ENCODE measurements at regions of chr10 and their contacts with region 1.

Region 1: GRCh38 chr10:25080880-25081581 is 64.6 kb downstream of the THNSL1 start:
- DNase-seq: peak; percentile 77 to 90 (median 80)
- ATAC-seq: peak; percentile 96
- H3K4me3 ChIP-seq: no peak overlapping the region
- H3K27ac ChIP-seq: no peak overlapping the region
- H3K4me1 ChIP-seq: peaks cover 0 to 14% of the 10 kb centered on the region in 2 experiments; a peak in 2 of 5 replicates
- H3K27me3 ChIP-seq: no peaks in the 10 kb centered on the region
- CTCF ChIP-seq: peak; percentile 90 to 95 (median 93)
- EP300 ChIP-seq: no peak
- POLR2A ChIP-seq: no peak
- RAD21 ChIP-seq: peak; percentile 94 to 97

Region 2: GRCh38 chr10:24617771-24618391 is 463.1 kb before region 1 on chr10:
- CTCF ChIA-PET with region 1: interaction called, 3 read pairs
- POLR2A ChIA-PET with region 1: no interaction called
- in situ Hi-C with region 1: no loop called
- intact Hi-C with region 1: loop called (anchors 5 kb)
- DNase-seq: peak; percentile 55 to 80 (median 66)
- ATAC-seq: peak; percentile 98
- H3K4me3 ChIP-seq: no peak overlapping the region
- H3K27ac ChIP-seq: no peak overlapping the region
- H3K4me1 ChIP-seq: no peaks in the 10 kb centered on the region; a peak in 2 of 5 replicates
- H3K27me3 ChIP-seq: no peaks in the 10 kb centered on the region
- CTCF ChIP-seq: peak; percentile 94 to 96 (median 94)
- EP300 ChIP-seq: no peak
- POLR2A ChIP-seq: no peak
- RAD21 ChIP-seq: peak; percentile 58 to 79

Region 3: DNA sequence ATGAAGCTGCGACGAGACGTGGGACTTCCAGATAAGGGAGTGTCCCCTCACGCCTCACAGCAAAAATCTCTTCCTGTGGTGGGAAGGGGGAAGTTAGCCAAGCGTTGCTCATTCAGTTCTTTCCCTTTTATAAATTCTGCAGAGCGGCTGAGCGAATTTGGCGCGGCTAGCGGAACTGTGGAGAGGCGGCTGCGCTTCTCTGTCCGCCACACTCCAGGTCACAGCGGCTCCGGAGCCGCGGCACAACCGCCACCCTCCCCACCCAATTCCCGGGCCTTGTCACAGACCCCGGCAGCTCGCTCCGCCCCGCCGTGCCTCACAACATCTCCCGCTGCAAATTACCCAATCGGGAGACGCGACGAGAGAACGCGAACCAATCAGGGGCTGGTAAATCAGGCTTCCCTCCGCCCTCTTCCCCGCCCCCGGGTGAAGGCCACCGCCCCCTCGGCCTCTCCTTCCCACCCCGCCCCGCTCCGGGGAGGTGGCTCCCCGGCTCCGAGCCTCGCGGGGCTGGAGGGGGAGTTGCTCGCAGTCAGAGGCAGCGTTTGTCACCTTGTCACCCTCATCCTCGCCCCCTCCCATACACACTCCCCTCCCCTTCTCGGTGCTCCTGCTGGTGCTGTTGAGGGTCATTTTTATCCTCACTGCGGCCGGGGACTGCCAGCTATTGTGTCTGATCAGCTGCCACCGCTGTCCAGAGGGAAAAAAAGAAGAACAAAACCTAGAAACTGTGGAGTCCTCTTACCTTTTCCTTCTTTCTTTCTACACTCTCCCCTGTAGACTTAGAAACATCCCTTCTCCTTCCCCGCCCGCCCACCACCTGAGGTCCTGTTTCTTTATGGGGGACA is 356.4 kb before region 1 on chr10:
- CTCF ChIA-PET with region 1: interaction called, 3 read pairs
- POLR2A ChIA-PET with region 1: interaction called, 5 read pairs
- in situ Hi-C with region 1: no loop called
- intact Hi-C with region 1: loop called (anchors 1 kb)
- DNase-seq: peak; percentile 98 to 99 (median 98)
- ATAC-seq: peak; percentile 86
- H3K4me3 ChIP-seq: peak overlapping the region; percentile 81
- H3K27ac ChIP-seq: peak overlapping the region; percentile 87
- H3K4me1 ChIP-seq: peaks cover 3 to 22% of the 10 kb centered on the region in 2 experiments; a peak in 3 of 5 replicates
- H3K27me3 ChIP-seq: no peaks in the 10 kb centered on the region
- CTCF ChIP-seq: no peak
- EP300 ChIP-seq: no peak
- POLR2A ChIP-seq: peak; percentile 89
- RAD21 ChIP-seq: peak in 1 of 2 experiments; percentile 16; a peak in 1 of 4 replicates

Region 4: GRCh38 chr10:24952707-24953645 is 128.1 kb before region 1 on chr10:
- CTCF ChIA-PET with region 1: no interaction called
- POLR2A ChIA-PET with region 1: interaction called, 4 read pairs
- in situ Hi-C with region 1: no loop called
- intact Hi-C with region 1: loop called (anchors 5 kb)
- DNase-seq: peak; percentile 64 to 80 (median 76)
- ATAC-seq: peak; percentile 80
- H3K4me3 ChIP-seq: peak overlapping the region; percentile 52
- H3K27ac ChIP-seq: peak overlapping the region; percentile 85
- H3K4me1 ChIP-seq: peaks cover 18 to 21% of the 10 kb centered on the region in 2 experiments; a peak in 4 of 5 replicates
- H3K27me3 ChIP-seq: no peaks in the 10 kb centered on the region
- CTCF ChIP-seq: peak; percentile 35 to 60 (median 37); a peak in 3 of 6 replicates
- EP300 ChIP-seq: no peak
- POLR2A ChIP-seq: no peak; the same call in 1 of the 2 replicates
- RAD21 ChIP-seq: peak; percentile 22 to 47

Region 5: DNA sequence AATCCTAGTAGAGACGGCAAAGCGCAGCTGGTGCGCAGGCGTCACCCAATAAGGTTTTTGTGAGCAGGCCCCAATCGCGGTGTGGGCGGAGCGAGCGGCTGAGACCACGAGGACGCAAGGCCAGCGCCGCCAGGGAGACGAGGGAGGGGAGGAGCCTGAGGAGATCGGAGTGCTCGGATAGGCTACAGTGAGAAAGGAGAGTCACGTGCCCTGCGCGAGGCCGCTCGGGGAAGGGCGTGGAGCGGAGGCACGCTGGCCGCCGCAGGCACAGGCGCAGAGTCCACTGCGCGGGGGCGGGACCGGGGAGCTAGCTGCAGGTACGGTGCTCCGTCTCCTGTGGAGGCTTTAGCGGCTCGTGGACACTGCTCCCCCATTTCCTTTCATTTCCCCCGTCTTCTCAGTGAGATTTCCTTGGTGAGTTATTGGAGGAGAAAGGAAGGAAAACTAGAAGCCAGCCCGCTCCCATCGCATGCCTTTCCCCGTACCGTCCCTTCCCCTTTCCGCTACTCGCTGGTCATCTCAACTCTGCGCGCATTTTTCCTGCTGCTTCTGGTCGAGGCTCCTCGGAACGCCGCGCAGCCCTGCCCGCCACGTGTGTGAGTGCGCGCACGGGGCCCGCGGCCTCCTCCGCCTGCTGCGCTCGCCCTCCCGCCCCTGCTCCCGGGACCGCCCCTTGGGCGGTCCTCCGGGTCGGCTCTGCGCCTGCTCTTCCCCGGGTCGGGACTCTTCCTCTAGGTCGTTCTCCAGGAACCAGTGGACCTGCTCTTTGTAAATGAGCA is 64.5 kb before region 1 on chr10 and contains the start of gene THNSL1:
- CTCF ChIA-PET with region 1: no interaction called
- POLR2A ChIA-PET with region 1: no interaction called
- in situ Hi-C with region 1: no loop called
- intact Hi-C with region 1: loop called (anchors 2 kb)
- DNase-seq: peak; percentile 96 to 99 (median 97)
- ATAC-seq: peak; percentile 99
- H3K4me3 ChIP-seq: peak within 1 kb of the TSS; percentile 49
- H3K27ac ChIP-seq: peak within 1 kb of the TSS; percentile 94
- H3K4me1 ChIP-seq: peaks cover 7 to 9% of the 10 kb centered on the region in 2 experiments
- H3K27me3 ChIP-seq: no peaks in the 10 kb centered on the region
- CTCF ChIP-seq: 0 out of 6 replicates have a peak, but pooled peaks of 1 of the 3 experiments have one; percentile 2
- EP300 ChIP-seq: no peak; the same call in 1 of the 2 replicates
- POLR2A ChIP-seq: peak; percentile 94
- RAD21 ChIP-seq: no peak
- polyA plus RNA-seq, gene THNSL1: 5.9 to 7.6 TPM

Region 6: DNA sequence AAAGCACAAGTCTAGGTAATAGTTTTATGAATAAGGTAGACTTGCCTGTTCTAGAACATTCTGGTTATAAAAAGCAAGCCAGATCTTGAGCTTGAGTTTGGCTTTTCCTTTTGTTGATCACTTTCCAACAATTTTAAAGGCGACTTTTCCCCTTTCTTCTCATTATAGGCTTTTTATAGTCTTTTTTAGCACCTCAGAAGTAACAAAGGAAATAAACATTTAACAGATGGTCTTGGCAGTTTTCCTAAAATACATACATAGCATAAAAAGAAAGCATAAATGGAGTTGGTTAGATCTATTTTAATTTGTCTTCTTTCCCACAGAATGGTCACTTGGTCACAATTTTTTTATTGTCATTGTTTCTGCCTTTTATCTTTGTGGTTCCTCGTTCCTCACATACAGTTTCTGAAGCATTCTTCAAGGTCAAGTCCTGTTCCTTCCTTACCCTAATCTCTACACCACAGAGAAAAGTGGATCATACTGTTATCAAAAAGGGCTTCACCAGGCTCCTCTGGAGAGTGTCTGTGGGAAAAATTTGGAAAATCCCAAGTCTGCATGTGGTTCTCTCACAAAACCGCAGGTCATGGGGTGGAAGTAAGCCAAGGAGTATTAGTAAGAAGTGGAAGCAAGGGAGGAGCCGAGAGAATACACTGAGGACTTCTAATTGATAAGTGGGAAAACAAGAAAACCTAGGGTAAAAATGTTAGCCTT is 33.3 kb before region 1 on chr10:
- CTCF ChIA-PET with region 1: no interaction called
- POLR2A ChIA-PET with region 1: no interaction called
- in situ Hi-C with region 1: no loop called
- intact Hi-C with region 1: loop called (anchors 1 kb)
- DNase-seq: peak in 2 of 4 experiments; percentile 46 to 68
- ATAC-seq: peak; percentile 78
- H3K4me3 ChIP-seq: no peak overlapping the region
- H3K27ac ChIP-seq: peak overlapping the region; percentile 40; the same call in 2 of the 3 replicates
- H3K4me1 ChIP-seq: peaks cover 7 to 18% of the 10 kb centered on the region in 2 experiments; a peak in 4 of 5 replicates
- H3K27me3 ChIP-seq: no peaks in the 10 kb centered on the region
- CTCF ChIP-seq: no peak
- EP300 ChIP-seq: peak; percentile 58
- POLR2A ChIP-seq: no peak
- RAD21 ChIP-seq: no peak

Measured in K562 (cell line).